ENCODE measurements at regions of chr21 and their contacts with region 1.

Region 1: DNA sequence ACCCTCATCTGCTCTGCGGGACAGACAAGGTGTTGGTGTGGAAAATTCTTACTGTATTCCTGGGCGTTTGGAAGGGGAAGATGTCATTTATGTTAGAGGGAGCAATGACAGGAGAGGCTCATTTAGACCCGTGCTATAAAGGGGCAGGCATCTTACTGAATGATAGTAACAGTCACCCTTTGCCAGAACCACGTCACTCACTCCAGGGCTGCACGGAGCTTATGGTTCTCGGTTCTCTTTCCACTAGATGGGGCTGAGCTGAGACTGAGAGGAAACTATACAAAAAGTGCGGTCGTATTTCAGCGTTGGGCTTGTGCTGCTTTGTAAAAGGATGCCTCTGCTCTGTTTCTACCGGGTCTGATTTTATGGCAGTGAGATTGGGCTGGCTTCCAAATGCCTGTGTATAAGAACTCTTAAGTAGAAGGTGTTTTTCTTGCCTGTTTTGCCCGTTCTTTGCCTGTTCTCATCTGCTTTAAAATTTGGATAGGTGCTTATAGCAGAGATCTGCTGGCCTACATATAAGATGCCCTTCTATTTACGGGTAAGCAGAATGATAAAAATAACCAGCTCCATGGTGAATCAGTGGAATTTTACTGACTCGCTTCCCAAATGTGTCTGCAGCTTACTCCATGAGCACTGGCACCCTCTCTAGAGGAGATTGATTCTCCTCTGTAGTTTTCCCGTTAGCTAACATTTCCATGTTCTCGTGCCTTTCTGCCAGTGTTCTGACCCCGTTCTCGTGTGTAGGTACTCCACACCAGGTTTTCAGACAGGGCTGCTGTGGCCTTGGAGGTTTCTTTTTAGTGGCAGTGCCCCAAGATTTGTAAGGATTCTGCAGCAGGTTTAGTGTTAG is 55.9 kb downstream of the MRPS6 start:
- DNase-seq: peak; percentile 43 to 62 (median 52)
- H3K4me3 ChIP-seq: no peak overlapping the region
- H3K27ac ChIP-seq: peak overlapping the region; percentile 15 to 52
- H3K4me1 ChIP-seq: peaks cover 29% of the 10 kb centered on the region
- H3K27me3 ChIP-seq: no peaks in the 10 kb centered on the region
- CTCF ChIP-seq: no peak
- EP300 ChIP-seq: no peak
- POLR2A ChIP-seq: no peak

Region 2: GRCh38 chr21:34008618-34009017 is 120.6 kb before region 1 on chr21:
- intact Hi-C with region 1: no loop called
- DNase-seq: no peak
- H3K4me3 ChIP-seq: no peak overlapping the region
- H3K27ac ChIP-seq: no peak overlapping the region
- H3K4me1 ChIP-seq: peaks cover 2% of the 10 kb centered on the region
- H3K27me3 ChIP-seq: no peaks in the 10 kb centered on the region
- CTCF ChIP-seq: no peak
- EP300 ChIP-seq: no peak
- POLR2A ChIP-seq: no peak

Region 3: GRCh38 chr21:34073032-34073869 is 56.0 kb before region 1 on chr21 and contains the starts of genes MRPS6 and SLC5A3:
- intact Hi-C with region 1: loop called in 1 of 4 experiments (anchors 10 kb)
- DNase-seq: peak; percentile 81 to 90 (median 87)
- H3K4me3 ChIP-seq: peak within 1 kb of the TSS; percentile 83
- H3K27ac ChIP-seq: peak within 1 kb of the TSS; percentile 91 to 99
- H3K4me1 ChIP-seq: peaks cover 10% of the 10 kb centered on the region
- H3K27me3 ChIP-seq: no peaks in the 10 kb centered on the region
- CTCF ChIP-seq: peak in 1 of 3 donors; percentile 7
- EP300 ChIP-seq: no peak
- POLR2A ChIP-seq: peak; percentile 61
- total RNA-seq, gene MRPS6: 19.1 to 49.9 (median 45.8) TPM
- total RNA-seq, gene SLC5A3: 9.8 to 16.9 (median 14.9) TPM

Region 4: DNA sequence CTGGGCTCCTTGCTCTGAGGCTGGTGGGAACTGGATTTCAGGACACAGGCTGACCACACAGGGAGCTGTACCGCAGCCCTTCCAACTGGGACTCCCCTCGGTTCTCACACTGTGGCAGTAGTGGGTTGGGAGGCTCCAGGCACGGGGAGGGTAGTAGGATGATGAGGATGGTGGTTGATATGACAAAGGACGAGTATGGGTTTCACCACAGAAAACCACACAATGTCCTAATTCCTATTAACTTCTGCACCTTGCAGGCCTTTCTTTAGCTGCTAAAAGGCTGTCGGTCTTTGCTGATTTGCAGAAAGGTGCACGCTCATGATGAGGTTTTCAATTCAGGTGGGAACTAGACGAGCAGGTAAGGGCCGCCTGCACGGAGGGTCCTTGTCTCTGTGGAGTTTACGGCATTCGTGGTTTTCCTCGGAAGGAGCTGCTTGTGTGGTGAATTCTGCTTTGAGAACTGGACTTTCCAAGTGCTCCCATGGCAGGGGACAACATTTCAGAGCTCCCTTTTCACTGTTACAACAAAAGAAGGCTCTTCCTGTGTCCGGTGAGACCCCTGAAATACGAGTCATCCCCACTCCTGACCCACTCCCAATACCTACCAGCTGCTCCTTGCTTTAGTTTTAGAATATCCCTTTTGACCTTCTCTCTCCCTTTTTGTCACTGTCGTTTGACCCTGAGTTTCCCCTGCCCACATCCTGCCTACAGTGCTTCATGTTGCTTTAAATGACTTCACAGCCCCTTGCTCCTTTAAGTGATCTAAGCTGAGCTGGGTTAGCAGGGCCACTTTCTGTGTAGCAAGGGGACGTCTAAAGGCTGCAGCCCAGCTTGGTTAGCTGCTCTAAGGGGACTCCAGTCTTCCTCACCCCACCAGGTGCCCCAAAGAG is 69.2 kb after region 1 on chr21:
- intact Hi-C with region 1: loop called in 1 of 4 experiments (anchors 2 kb)
- DNase-seq: no peak
- H3K4me3 ChIP-seq: no peak overlapping the region
- H3K27ac ChIP-seq: no peak overlapping the region
- H3K4me1 ChIP-seq: no peaks in the 10 kb centered on the region
- H3K27me3 ChIP-seq: no peaks in the 10 kb centered on the region
- CTCF ChIP-seq: no peak
- EP300 ChIP-seq: no peak
- POLR2A ChIP-seq: no peak

Measured in ovary (tissue), 10 donors.